ENCODE measurements at regions of chr17 and their contacts with region 1.

Region 1: DNA sequence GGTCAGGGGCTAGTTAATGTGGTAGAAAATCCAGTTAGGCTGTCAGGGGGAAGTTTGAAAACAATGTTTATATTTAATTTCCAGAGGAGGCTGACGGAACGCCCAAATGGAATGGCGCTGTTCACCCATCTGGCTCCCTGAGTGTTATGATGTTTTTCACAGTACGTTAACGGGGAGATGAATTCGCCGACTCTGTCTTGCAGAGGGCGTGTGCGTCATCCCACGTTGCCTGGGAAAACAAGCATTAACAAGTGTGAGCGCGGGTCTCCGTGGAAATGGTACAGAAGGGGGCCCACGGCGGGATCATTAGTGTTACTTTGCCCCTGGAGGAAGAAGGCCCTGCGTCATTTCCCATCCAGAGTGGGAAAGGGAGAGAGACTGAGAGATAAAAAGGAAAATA is 29.6 kb downstream of the RGS9 start:
- DNase-seq: no peak
- H3K4me3 ChIP-seq: no peak overlapping the region
- H3K27ac ChIP-seq: no peak overlapping the region
- H3K4me1 ChIP-seq: no peaks in the 10 kb centered on the region
- H3K27me3 ChIP-seq: no peaks in the 10 kb centered on the region
- CTCF ChIP-seq: no peak
- POLR2A ChIP-seq: no peak

Region 2: DNA sequence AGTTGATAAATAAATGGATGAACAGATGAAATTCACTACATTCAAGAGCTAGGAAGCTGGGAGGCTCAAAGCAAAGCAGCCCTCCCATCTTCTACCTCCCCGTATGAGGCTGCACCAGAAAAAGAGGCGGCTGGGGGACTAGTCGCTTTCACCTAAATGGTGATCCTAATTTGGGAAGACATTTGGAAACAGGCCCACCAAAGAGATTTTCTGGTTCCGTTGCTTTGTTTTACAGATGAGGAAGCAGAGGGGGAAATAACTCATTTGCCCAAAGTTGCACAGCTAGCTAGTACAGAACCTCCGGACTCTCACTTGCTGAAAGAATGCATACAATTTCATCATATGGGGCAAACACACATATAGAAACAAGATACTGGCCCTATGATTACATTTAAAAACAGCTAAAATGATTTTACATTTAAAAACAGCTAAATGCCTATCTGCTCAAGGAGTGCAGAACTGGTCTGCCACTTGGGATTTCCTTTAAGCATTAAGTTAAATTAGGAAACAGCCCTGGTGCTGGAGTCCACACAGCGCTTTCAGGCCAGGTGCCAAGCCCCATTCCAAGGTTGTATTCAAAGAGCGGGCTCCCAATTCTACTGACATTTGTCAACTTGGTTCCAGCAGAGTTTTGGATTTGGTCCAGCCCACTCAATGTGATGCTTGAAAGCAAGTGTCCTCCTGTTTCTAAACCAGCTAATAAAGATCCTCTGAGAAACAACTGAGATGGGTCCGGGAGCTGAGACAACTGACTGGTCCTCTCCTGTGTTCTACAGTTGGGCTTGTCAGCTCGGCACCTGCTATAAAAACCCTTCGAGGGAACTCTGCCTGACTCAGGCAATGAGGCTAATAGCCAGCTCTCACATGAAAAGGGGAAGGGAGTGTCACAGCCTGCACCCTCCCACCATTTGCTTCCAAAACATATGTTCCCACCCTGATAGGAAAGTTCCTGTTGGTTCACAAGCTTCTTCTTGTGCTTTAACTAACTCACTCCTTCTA is 1048.5 kb before region 1 on chr17:
- intact Hi-C with region 1: loop called (anchors 5 kb)
- DNase-seq: no peak
- H3K4me3 ChIP-seq: no peak overlapping the region
- H3K27ac ChIP-seq: peak overlapping the region; percentile 37 to 49
- H3K4me1 ChIP-seq: no peaks in the 10 kb centered on the region
- H3K27me3 ChIP-seq: no peaks in the 10 kb centered on the region
- CTCF ChIP-seq: no peak
- POLR2A ChIP-seq: no peak

Region 3: GRCh38 chr17:65103896-65104295 is 62.9 kb before region 1 on chr17:
- intact Hi-C with region 1: no loop called
- DNase-seq: no peak
- H3K4me3 ChIP-seq: no peak overlapping the region
- H3K27ac ChIP-seq: no peak overlapping the region
- H3K4me1 ChIP-seq: peaks cover 4 to 10% of the 10 kb centered on the region in 2 donors
- H3K27me3 ChIP-seq: no peaks in the 10 kb centered on the region
- CTCF ChIP-seq: no peak
- POLR2A ChIP-seq: no peak